Calu3 (cell line): ENCODE measurements at regions of chr18 and their contacts with region 1.

Region 1: DNA sequence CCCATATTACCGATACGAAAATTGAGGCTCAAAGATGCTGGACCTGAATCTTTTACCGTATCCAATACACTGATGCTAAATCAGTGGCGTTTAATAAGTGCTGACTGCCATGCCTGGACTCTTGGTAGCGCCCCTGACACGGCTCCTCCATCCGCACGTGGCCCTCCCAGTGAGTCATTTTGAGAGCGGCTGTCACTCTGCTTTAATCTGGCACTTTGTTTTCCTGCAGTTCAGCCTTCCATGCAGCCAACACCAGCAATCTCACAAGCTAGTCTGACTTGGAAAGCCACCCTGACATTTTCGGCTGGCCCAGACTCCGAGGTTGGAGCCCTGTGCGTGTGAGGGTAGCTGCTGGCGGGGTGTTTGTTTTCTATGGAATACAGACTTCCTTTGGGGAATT is 155.1 kb upstream of the LMAN1 start:
- DNase-seq: no peak
- H3K4me3 Mint-ChIP-seq: no peak overlapping the region
- H3K27ac Mint-ChIP-seq: no peak overlapping the region
- H3K4me1 Mint-ChIP-seq: peaks cover 26% of the 10 kb centered on the region
- H3K27me3 Mint-ChIP-seq: peaks cover 93% of the 10 kb centered on the region
- CTCF ChIP-seq: no peak

Region 2: DNA sequence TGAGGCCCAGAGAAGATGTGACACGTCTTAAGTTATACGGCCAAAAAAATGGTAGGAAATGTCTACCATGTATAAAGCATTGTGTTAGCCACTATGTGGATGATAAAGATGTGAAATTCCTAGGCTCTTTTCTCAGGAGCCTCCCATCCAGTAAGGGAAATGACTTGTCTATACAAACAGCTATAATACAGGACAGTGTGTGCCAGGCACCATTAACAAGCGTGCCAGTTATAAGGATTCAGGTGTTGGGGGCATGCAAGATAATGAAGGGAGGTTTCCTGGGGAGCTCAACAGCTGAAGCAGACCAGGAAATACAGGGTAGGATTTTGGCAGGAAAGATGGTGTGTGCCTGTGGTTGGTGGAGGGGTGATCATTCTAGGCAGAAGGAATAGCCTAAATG is 922.9 kb before region 1 on chr18:
- CTCF ChIA-PET with region 1: interaction called, 10 read pairs
- intact Hi-C with region 1: no loop called
- DNase-seq: no peak
- H3K4me3 Mint-ChIP-seq: no peak overlapping the region
- H3K27ac Mint-ChIP-seq: no peak overlapping the region
- H3K4me1 Mint-ChIP-seq: no peaks in the 10 kb centered on the region
- H3K27me3 Mint-ChIP-seq: no peaks in the 10 kb centered on the region
- CTCF ChIP-seq: no peak